ENCODE measurements at regions of chr10 and their contacts with region 1.

Region 1: DNA sequence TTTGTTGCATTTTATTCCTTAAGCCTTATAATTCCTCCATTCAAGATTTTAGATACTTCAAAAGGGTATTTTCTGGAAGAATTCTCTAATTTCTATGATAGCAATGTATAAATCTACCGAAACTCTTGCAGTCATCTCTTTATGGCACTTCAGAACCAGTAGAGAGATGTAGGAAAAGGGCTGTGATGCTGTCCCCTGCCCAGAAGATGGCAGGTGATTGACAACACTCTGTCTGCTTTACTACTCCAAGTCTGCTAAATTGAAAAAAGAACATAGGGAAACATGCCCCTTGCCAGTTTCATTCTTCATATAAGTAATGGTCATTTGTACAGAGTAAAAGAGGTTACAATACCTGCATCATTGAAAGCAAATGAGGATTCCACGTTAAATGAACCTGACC is 5.1 kb downstream of the TCTN3 start:
- DNase-seq: no peak
- H3K4me3 ChIP-seq: no peak overlapping the region
- H3K27ac ChIP-seq: no peak overlapping the region
- H3K4me1 ChIP-seq: peaks cover 0 to 3% (median 1%) of the 10 kb centered on the region in 4 experiments; a peak in 2 of 7 replicates
- H3K27me3 ChIP-seq: no peaks in the 10 kb centered on the region
- CTCF ChIP-seq: no peak
- EP300 ChIP-seq: no peak
- POLR2A ChIP-seq: no peak
- RAD21 ChIP-seq: peak in 1 of 2 experiments; percentile 15; a peak in 1 of 4 replicates

Region 2: GRCh38 chr10:95419399-95419798 is 269.2 kb before region 1 on chr10:
- CTCF ChIA-PET with region 1: no interaction called
- POLR2A ChIA-PET with region 1: no interaction called
- DNase-seq: no peak
- H3K4me3 ChIP-seq: no peak overlapping the region
- H3K27ac ChIP-seq: no peak overlapping the region
- H3K4me1 ChIP-seq: peaks cover 3 to 8% (median 4%) of the 10 kb centered on the region in 4 experiments; a peak in 5 of 7 replicates
- H3K27me3 ChIP-seq: no peaks in the 10 kb centered on the region
- CTCF ChIP-seq: no peak
- EP300 ChIP-seq: no peak
- POLR2A ChIP-seq: no peak
- RAD21 ChIP-seq: no peak

Region 3: DNA sequence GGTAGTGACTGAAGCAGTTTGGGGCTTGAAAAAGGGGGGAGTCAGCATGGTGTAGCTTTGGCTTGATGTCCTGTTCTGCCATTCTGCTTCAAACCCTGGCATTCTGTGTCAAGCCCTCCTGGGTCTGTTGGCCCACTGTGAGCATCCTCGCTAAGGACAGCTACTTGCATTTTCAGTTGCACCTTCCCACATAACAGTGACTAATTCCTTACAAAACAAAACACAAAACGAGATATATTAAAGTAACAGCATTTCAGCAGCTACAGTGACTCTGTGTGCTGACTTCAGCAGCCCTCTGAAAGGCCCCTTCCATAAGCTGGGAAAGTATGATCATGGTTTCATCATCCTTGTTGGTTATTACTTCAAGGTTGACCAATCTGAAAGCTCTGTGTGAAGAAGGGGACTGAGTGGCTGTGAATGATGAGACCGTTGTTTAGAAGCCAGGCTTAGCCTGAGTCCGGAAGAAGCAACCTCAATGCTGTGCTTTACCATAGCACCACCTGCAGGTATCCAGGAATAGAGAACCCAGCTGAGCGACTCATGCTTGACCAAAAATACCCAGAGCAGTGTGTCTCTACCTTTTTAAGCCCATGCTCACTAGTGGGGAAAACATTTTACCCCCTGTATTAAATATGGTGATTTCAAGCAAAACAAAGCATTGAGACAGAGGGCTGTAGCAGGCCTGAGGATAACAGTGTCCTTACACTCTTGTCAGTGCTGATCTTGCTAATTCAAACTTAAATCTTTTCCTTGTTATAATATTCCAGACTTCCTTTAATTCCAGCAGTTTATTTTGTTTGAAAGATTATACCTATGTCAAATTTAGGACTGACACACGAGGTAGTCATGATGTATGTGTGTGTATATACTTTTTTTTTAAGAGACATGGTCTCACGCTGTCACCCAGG is 176.5 kb after region 1 on chr10:
- CTCF ChIA-PET with region 1: interaction called, 63 read pairs
- POLR2A ChIA-PET with region 1: interaction called, 4 read pairs
- DNase-seq: no peak
- H3K4me3 ChIP-seq: no peak overlapping the region
- H3K27ac ChIP-seq: no peak overlapping the region
- H3K4me1 ChIP-seq: no peaks in the 10 kb centered on the region
- H3K27me3 ChIP-seq: no peaks in the 10 kb centered on the region
- CTCF ChIP-seq: peak; percentile 47 to 87 (median 75)
- EP300 ChIP-seq: no peak
- POLR2A ChIP-seq: no peak
- RAD21 ChIP-seq: peak; percentile 90 to 91

Measured in H1 (cell line).